Thyroid gland (tissue), 4 donors: ENCODE measurements at regions of chr5 and their contacts with region 1.

Region 1: GRCh38 chr5:90434116-90434714 is 24.7 kb upstream of the CETN3 start:
- DNase-seq: peak; percentile 20 to 23
- H3K4me3 ChIP-seq: no peak overlapping the region
- H3K27ac ChIP-seq: no peak overlapping the region
- H3K4me1 ChIP-seq: peaks cover 6 to 13% of the 10 kb centered on the region in 2 donors
- H3K27me3 ChIP-seq: no peaks in the 10 kb centered on the region
- CTCF ChIP-seq: peak in 3 of 6 experiments; percentile 20 to 45 (median 28)
- POLR2A ChIP-seq: no peak

Region 2: GRCh38 chr5:90529194-90529938 is 95.2 kb after region 1 on chr5 and contains the start of gene LYSMD3:
- intact Hi-C with region 1: loop called (anchors 10 kb)
- DNase-seq: peak; percentile 97 to 98
- H3K4me3 ChIP-seq: peak within 1 kb of the TSS; percentile 72 to 94 (median 79)
- H3K27ac ChIP-seq: peak within 1 kb of the TSS; percentile 67 to 93 (median 91)
- H3K4me1 ChIP-seq: peaks cover 14 to 23% of the 10 kb centered on the region in 2 donors
- H3K27me3 ChIP-seq: no peaks in the 10 kb centered on the region
- CTCF ChIP-seq: no peak
- POLR2A ChIP-seq: peak; percentile 75 to 98
- total RNA-seq, gene LYSMD3: 20.9 to 32.7 (median 27.2) TPM

Region 3: DNA sequence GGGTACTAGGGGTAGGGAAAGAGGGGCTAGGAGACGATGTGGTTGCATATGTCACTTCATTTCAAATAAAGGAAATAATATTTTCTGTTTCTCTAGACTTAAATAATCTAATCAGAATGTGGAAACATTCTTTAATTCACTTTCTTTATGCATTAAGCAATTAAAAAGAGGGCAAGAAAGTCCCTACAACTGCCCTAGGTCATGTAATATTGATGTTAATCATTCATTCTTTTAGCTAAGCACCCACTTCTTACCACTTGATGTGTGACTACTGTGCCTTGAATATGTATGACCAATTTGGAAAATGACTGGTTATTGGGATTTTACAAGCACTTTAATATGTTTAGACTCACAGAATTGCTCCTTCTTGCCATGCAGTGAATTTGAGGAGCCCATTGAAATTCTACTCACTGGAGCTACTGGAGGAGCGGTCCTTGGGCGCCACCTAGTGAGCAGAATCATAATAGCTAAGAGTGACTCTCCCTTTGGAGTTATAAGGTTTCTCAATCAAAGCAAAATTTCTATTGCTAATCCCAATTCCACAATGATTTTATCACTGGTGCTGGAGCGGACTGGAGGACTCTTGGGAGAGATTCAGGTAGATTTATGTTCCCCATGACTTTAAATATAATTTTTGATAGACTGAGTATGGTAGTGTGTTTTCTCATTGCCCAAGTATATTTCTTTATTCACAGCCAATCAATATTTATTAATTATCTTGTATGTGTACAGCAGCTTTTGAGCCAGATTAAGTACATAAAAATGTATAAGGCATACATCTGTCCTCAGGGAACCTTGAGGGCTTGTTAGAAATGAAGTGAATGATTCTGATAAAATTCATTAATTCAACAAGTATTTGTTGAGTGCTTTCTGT is 349.5 kb after region 1 on chr5:
- intact Hi-C with region 1: loop called (anchors 10 kb)
- DNase-seq: peak; percentile 61 to 74
- H3K4me3 ChIP-seq: no peak overlapping the region
- H3K27ac ChIP-seq: no peak overlapping the region
- H3K4me1 ChIP-seq: no peaks in the 10 kb centered on the region
- H3K27me3 ChIP-seq: no peaks in the 10 kb centered on the region
- CTCF ChIP-seq: peak; percentile 73 to 93 (median 78)
- POLR2A ChIP-seq: no peak